Activated CD8-positive, alpha-beta T cell treated with anti-CD3 and anti-CD28 coated beads, Interleukin-2, amount 10 ng/mL, durations not matched to agents 7 days and 5 days (primary cell): ENCODE measurements at regions of chr15 and their contacts with region 1.

Region 1: GRCh38 chr15:40941528-40942336 is 11.5 kb upstream of the CHAC1 start:
- DNase-seq: peak; percentile 77
- ATAC-seq: peak; percentile 84
- H3K4me3 Mint-ChIP-seq: peak overlapping the region; percentile 73
- H3K27ac Mint-ChIP-seq: no peak overlapping the region
- H3K4me1 Mint-ChIP-seq: peaks cover 43% of the 10 kb centered on the region
- H3K27me3 Mint-ChIP-seq: no peaks in the 10 kb centered on the region

Region 2: GRCh38 chr15:40928821-40929659 is 12.7 kb before region 1 on chr15 and contains the start of gene DLL4:
- CTCF ChIA-PET with region 1: interaction called, 97 read pairs
- POLR2A ChIA-PET with region 1: interaction called, 3 read pairs
- DNase-seq: peak; percentile 51
- ATAC-seq: peak; percentile 53
- H3K4me3 Mint-ChIP-seq: peak within 1 kb of the TSS; percentile 50
- H3K27ac Mint-ChIP-seq: no peak within 1 kb of the TSS
- H3K4me1 Mint-ChIP-seq: peaks cover 57% of the 10 kb centered on the region
- H3K27me3 Mint-ChIP-seq: peaks cover 77% of the 10 kb centered on the region
- total RNA-seq, gene DLL4: not detected

Region 3: DNA sequence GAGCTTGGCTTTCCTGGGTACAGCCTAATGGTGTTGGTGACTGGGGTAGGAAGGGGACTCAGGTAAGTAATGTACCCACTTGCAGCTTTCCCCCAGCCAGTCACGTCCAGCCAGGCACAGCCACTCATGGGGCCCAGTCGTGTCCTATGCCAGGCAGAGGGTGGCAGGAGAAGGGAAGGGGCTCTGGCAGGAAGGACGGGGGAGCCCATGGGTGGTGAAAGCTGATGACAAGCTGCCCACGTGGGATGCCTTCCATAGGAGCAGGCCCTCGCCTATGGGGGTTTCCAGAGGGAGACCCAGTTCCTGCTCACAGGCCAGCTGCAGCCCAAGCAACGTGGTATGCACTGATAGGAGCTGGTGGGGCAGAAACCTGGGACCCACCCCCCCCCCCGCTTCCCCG is 22.3 kb after region 1 on chr15:
- CTCF ChIA-PET with region 1: interaction called, 13 read pairs
- POLR2A ChIA-PET with region 1: no interaction called
- DNase-seq: no peak
- ATAC-seq: no peak
- H3K4me3 Mint-ChIP-seq: no peak overlapping the region
- H3K27ac Mint-ChIP-seq: no peak overlapping the region
- H3K4me1 Mint-ChIP-seq: no peaks in the 10 kb centered on the region
- H3K27me3 Mint-ChIP-seq: peaks cover 3% of the 10 kb centered on the region

Region 4: GRCh38 chr15:41022487-41023090 is 80.9 kb after region 1 on chr15:
- CTCF ChIA-PET with region 1: interaction called, 27 read pairs
- POLR2A ChIA-PET with region 1: no interaction called
- DNase-seq: peak; percentile 68
- ATAC-seq: no peak
- H3K4me3 Mint-ChIP-seq: no peak overlapping the region
- H3K27ac Mint-ChIP-seq: no peak overlapping the region
- H3K4me1 Mint-ChIP-seq: peaks cover 3% of the 10 kb centered on the region
- H3K27me3 Mint-ChIP-seq: no peaks in the 10 kb centered on the region

Region 5: GRCh38 chr15:41230650-41231533 is 289.2 kb after region 1 on chr15 and contains the starts of genes CHP1 and EXD1:
- CTCF ChIA-PET with region 1: interaction called, 18 read pairs
- POLR2A ChIA-PET with region 1: no interaction called
- DNase-seq: peak; percentile 98
- ATAC-seq: peak; percentile 100
- H3K4me3 Mint-ChIP-seq: peak within 1 kb of the TSS; percentile 90
- H3K27ac Mint-ChIP-seq: peak within 1 kb of the TSS; percentile 91
- H3K4me1 Mint-ChIP-seq: peaks cover 33% of the 10 kb centered on the region
- H3K27me3 Mint-ChIP-seq: peaks cover 6% of the 10 kb centered on the region
- total RNA-seq, gene CHP1: 62.2 to 62.8 TPM
- total RNA-seq, gene EXD1: not detected